Activated T-helper 1 cell treated with anti-CD3 and anti-CD28 coated beads, Interleukin-12 subunit alpha, Interleukin-12 subunit beta, Interleukin-2, Interleukin-4 antibody, amounts not matched to agents 30 ng/mL and 10 ng/mL and 1 ng/mL, durations not matched to agents 14 hours and 24 hours and 36 hours (primary cell): ENCODE measurements at regions of chr6 and their contacts with region 1.

Region 1: DNA sequence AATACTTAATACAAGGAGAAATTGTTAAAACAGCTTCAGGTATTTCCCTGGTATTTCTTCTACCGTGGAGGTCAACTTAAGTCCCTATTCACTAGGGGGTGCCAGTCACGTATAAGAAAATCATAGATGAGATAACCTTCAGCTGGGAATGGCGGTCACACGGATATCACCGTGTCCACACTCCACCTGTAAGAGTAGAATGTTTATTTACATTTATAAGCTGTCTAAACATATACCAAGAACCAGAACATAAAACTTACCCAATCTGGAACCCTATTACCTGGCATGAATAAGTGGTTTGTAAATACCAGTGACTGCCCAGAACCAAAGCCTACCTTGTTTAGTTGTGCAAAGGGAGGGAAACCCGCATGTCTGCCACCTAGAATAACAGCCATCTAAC is 1.9 kb upstream of the ELOVL4 start:
- DNase-seq: peak; percentile 40
- H3K4me3 Mint-ChIP-seq: no peak overlapping the region
- H3K27ac Mint-ChIP-seq: no peak overlapping the region
- H3K4me1 Mint-ChIP-seq: peaks cover 17% of the 10 kb centered on the region
- H3K27me3 Mint-ChIP-seq: peaks cover 34% of the 10 kb centered on the region

Region 2: DNA sequence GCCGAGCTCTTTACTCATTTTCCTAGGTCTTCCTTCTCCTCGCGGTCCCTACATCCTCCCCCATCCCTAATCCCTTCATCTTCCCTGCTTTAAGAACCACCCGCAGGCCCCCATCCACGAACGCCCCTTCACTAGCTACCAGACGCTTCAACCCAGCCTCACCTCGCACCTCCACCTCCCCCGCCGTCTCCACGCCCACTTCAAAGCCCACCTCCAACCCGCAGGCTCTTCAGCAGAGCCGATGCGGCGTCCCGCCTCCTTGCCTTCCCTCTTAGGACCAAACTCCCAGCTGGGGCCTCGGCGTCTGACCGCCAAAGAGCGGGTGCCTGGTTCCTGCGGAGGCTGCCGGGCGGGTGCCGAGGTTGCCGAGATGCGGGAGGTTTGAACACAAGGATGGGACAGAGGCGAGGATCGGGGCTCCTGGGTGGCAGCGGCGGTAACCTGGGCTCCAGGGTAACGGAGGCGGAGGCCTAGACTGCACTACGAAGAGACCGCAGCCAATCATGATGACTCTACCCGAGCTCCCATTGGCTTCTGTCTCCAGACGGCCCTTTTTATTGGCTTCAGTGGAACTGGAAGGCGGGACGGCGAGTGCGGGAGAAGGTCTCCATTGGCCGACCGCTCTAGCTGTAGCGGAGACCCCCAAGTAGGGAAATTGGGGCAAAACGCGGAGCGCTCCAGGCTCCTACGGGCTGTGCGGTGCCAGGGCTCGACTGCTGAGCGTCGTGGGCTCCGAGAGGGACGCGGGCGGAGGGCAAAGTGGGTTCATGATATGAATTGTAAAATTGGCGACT is 412.1 kb before region 1 on chr6 and contains the start of gene LCA5:
- intact Hi-C with region 1: loop called (anchors 5 kb)
- DNase-seq: peak; percentile 81
- H3K4me3 Mint-ChIP-seq: no peak within 1 kb of the TSS
- H3K27ac Mint-ChIP-seq: no peak within 1 kb of the TSS
- H3K4me1 Mint-ChIP-seq: no peaks in the 10 kb centered on the region
- H3K27me3 Mint-ChIP-seq: peaks cover 17% of the 10 kb centered on the region
- total RNA-seq, gene LCA5: 0.08 and 0.17 TPM in 2 replicates

Region 3: GRCh38 chr6:80004173-80005072 is 55.2 kb after region 1 on chr6 and contains the start of gene TTK:
- intact Hi-C with region 1: loop called (anchors 1 kb)
- DNase-seq: peak; percentile 92
- H3K4me3 Mint-ChIP-seq: peak within 1 kb of the TSS; percentile 95
- H3K27ac Mint-ChIP-seq: peak within 1 kb of the TSS; percentile 94
- H3K4me1 Mint-ChIP-seq: peaks cover 50% of the 10 kb centered on the region
- H3K27me3 Mint-ChIP-seq: no peaks in the 10 kb centered on the region
- total RNA-seq, gene TTK: 22.4 and 23.5 TPM in 2 replicates

Region 4: DNA sequence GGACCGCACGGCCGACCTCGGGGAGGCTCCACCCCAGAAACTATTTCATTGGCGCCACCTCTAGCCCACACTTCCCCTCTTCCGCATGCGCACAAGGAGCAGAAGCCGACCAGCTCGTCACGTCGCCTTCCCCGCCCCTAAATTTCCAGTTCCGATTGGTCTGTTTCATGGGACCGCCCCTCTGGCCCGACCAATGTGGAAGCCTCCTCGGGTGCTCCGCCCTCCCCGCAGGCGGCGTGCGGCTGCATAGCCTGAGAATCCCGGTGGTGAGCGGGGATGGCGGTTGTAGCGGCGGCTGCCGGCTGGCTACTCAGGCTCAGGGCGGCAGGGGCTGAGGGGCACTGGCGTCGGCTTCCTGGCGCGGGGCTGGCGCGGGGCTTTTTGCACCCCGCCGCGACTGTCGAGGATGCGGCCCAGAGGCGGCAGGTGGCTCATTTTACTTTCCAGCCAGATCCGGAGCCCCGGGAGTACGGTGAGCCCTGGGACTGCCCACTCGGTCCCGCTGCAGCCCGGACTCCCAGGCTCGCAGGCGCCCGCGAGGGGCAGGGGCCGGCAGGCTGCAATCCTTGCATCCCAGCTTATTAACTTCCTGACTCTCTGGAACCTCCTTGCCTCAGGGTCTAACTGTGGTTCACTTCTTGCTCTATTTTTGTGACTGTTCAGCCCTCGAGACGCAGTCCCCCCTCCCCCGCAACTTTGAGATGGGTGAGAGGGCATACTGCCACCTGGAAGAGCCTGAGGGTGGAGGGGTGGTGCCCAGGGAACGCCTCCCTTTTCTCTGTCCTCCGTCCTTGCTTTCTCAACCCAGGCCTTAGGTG is 157.4 kb after region 1 on chr6 and contains the start of gene BCKDHB:
- intact Hi-C with region 1: loop called (anchors 1 kb)
- DNase-seq: peak; percentile 98
- H3K4me3 Mint-ChIP-seq: peak within 1 kb of the TSS; percentile 96
- H3K27ac Mint-ChIP-seq: peak within 1 kb of the TSS; percentile 90
- H3K4me1 Mint-ChIP-seq: peaks cover 31% of the 10 kb centered on the region
- H3K27me3 Mint-ChIP-seq: peaks cover 2% of the 10 kb centered on the region
- total RNA-seq, gene BCKDHB: 13.3 and 14.4 TPM in 2 replicates

Region 5: DNA sequence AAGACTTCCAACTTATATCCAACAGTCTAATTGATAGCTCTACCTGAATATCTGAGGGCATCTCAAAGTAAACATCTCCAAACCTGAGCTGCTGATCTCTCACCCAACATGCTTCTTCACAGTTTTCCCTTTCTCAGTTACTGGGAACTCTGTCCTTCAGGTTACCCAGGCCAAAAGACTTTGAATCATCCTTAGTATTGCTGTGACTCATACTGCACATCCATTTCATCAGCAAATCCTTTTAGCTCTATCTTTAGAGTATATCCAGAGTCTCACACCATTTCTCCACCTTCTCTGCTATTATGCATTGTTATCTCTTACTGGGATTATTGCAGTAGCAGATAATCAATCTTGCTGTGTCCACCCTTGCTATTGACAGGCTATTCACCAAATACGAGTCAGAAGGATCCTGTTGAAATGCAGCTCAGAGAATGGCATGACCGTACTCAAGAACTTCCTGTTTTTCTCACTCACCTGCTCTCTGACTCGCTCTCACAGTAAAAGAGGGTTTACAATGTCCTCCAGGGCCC is 214.5 kb after region 1 on chr6:
- intact Hi-C with region 1: loop called (anchors 5 kb)
- DNase-seq: no peak
- H3K4me3 Mint-ChIP-seq: no peak overlapping the region
- H3K27ac Mint-ChIP-seq: no peak overlapping the region
- H3K4me1 Mint-ChIP-seq: no peaks in the 10 kb centered on the region
- H3K27me3 Mint-ChIP-seq: no peaks in the 10 kb centered on the region